Activated CD8-positive, alpha-beta T cell treated with anti-CD3 and anti-CD28 coated beads, Interleukin-2, amount 10 ng/mL, durations not matched to agents 7 days and 5 days (primary cell): ENCODE measurements at regions of chr1 and their contacts with region 1.

Region 1: DNA sequence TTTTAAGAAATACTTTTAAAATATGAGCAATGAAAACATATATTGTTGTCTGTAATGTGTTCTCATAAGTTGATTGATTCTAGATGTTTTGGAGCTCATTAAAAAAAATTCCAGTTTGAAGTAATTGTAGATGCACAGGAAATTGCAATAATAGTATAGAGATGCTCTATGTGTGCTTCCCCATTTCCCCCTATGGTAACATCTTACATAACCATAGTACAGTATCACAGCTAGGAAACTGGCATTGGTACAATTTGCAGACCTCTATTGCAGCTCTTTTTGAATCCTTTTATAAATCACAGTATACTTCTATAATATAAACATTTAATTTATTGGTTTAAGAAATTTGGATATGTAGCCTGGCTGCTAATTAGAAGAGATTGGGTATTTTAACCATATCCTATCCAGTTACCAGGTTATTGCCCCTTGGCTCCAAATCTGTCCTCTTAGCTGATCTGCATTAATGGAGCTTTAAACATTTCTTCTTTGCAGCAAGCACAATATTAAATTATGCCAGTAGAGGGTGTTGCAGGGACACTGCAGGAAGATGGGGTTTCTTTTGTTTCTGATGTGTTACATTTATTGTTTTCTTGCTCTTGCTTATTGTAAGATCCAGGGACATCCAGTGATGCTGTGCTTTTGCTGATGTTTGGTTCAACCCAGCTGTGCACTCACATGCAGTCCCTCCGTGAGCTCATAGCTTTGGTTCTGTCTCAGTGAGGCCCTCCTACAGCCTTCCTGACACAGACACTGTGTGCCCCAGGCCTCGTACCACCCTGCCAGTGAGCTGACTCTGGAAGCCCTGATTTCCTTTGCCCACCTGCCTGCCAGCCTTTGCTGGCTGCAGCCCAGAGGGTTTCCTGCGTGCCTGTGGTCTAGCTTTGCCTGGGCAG is 103.3 kb downstream of the RABGAP1L start:
- DNase-seq: peak; percentile 32
- ATAC-seq: peak; percentile 44
- H3K4me3 Mint-ChIP-seq: no peak overlapping the region
- H3K27ac Mint-ChIP-seq: no peak overlapping the region
- H3K4me1 Mint-ChIP-seq: no peaks in the 10 kb centered on the region
- H3K27me3 Mint-ChIP-seq: no peaks in the 10 kb centered on the region

Region 2: GRCh38 chr1:173823781-173824330 is 438.7 kb before region 1 on chr1:
- CTCF ChIA-PET with region 1: no interaction called
- POLR2A ChIA-PET with region 1: no interaction called
- DNase-seq: no peak
- ATAC-seq: peak; percentile 63
- H3K4me3 Mint-ChIP-seq: peak overlapping the region; percentile 86
- H3K27ac Mint-ChIP-seq: peak overlapping the region; percentile 98
- H3K4me1 Mint-ChIP-seq: peaks cover 53% of the 10 kb centered on the region
- H3K27me3 Mint-ChIP-seq: no peaks in the 10 kb centered on the region

Region 3: DNA sequence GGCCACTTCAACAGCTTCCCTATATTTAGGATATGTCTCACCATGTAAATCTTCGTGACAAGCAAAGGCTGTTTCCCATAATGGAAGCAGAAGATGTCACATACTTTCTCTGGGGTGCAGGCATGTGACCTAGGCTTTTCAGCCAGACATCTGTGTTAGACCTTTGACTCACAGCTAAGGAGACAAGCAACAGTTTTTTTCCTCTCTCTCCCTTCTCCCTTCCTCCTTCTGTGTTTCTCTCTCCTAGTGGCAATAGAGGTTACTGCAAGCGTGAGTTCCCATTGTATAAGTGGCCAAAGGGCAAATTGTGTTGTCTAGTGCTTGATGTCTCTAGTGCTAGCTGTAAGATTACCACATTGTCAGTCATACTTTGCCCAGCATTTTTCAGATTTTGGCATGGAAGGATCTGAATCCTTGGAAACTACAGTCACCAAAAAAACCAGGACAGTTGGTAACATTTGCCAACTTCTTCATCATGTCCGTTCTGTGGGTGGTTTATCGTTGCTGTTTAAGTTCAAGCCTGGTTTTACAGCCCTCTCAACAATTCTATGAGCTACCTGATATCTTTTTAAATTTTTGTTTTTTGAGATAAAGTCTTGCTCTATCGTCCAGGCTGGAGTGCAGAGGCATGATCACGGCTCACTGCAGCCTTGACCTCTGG is 147.7 kb before region 1 on chr1:
- CTCF ChIA-PET with region 1: no interaction called
- POLR2A ChIA-PET with region 1: no interaction called
- DNase-seq: peak; percentile 40
- ATAC-seq: peak; percentile 77
- H3K4me3 Mint-ChIP-seq: no peak overlapping the region
- H3K27ac Mint-ChIP-seq: no peak overlapping the region
- H3K4me1 Mint-ChIP-seq: no peaks in the 10 kb centered on the region
- H3K27me3 Mint-ChIP-seq: peaks cover 7% of the 10 kb centered on the region

Region 4: DNA sequence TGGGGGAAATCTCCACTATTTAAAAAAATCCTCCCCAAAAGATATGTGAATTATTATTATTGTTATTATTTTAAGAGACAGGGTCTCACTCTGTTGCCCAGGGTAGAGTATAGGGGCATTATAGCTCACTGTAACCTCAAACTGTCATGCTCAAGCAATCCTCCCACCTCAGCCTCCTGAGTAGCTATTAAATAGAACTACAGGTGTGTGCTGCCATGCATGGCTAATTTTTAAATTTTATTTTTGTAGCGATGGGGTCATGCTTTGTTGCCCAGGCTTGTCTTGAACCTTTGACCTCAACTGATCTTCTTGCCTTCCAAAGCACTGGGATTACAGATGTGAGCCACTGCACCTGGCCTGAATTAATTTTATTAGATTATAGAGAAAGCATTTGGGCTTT is 13.5 kb after region 1 on chr1:
- CTCF ChIA-PET with region 1: interaction called, 14 read pairs
- POLR2A ChIA-PET with region 1: no interaction called
- DNase-seq: no peak
- ATAC-seq: no peak
- H3K4me3 Mint-ChIP-seq: no peak overlapping the region
- H3K27ac Mint-ChIP-seq: no peak overlapping the region
- H3K4me1 Mint-ChIP-seq: no peaks in the 10 kb centered on the region
- H3K27me3 Mint-ChIP-seq: no peaks in the 10 kb centered on the region

Region 5: DNA sequence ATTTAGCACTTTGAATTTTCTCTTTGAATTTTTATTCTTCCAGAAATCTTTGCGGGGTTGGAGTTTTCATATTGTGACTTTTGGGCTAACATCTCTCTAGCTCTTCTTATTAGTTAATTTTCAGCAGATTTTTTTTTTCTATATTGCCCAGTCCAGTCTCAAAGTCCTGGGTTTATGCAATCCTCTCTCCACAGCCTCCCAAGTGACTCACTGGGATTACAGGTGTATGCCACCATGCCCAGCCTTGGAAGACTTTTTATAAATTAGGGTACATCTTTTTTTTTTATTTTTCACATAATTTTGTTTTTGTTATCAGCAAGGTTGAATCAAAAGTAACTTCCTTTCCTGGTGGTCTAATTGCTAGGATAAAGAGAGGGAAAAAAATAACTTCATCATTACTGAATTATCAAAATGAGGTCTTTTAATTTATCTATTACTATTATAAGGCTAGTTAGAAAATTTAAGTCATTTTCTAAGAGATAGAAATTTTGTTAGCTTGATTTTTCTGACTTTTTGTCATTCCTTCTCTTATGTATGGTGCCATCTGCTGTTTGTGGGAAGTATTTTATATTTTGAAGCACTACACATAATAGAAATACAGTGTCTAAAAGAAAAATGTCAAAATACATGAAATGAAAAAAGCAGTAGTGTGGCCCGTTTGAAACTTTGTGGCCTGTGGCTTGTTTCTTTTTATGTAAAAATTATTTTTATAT is 463.7 kb after region 1 on chr1:
- CTCF ChIA-PET with region 1: interaction called, 51 read pairs
- POLR2A ChIA-PET with region 1: no interaction called
- DNase-seq: no peak
- ATAC-seq: no peak
- H3K4me3 Mint-ChIP-seq: no peak overlapping the region
- H3K27ac Mint-ChIP-seq: no peak overlapping the region
- H3K4me1 Mint-ChIP-seq: no peaks in the 10 kb centered on the region
- H3K27me3 Mint-ChIP-seq: no peaks in the 10 kb centered on the region

Region 6: GRCh38 chr1:174743654-174744561 is 481.3 kb after region 1 on chr1:
- CTCF ChIA-PET with region 1: interaction called, 58 read pairs
- POLR2A ChIA-PET with region 1: no interaction called
- DNase-seq: no peak
- ATAC-seq: no peak
- H3K4me3 Mint-ChIP-seq: no peak overlapping the region
- H3K27ac Mint-ChIP-seq: no peak overlapping the region
- H3K4me1 Mint-ChIP-seq: no peaks in the 10 kb centered on the region
- H3K27me3 Mint-ChIP-seq: no peaks in the 10 kb centered on the region